ENCODE measurements at regions of chr3 and their contacts with region 1.

Region 1: DNA sequence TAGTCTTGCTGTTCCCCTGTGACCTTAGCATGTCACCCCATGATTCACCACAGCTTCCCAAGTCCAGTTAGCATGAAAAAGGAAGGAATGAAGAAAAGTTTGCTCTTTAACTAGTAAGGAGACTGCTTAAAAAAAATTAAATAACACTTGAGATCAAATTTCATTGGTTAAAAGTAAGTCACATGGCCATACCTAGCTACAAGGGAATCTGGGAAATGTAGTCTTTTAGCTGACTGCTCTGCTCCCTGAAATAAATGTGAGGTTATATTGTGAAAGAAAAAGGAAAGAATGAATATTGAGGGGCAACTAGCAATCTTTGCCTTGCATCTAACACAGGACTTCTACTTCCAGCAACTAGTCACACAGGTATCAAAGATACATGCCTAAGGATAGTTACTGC is 84.7 kb upstream of the LRRN1 start:
- DNase-seq: no peak
- ATAC-seq: no peak
- H3K4me3 ChIP-seq: no peak overlapping the region
- H3K27ac ChIP-seq: no peak overlapping the region
- H3K4me1 ChIP-seq: no peaks in the 10 kb centered on the region
- H3K27me3 ChIP-seq: no peaks in the 10 kb centered on the region

Region 2: GRCh38 chr3:3468596-3468995 is 246.0 kb before region 1 on chr3:
- intact Hi-C with region 1: no loop called
- DNase-seq: no peak
- ATAC-seq: no peak
- H3K4me3 ChIP-seq: no peak overlapping the region
- H3K27ac ChIP-seq: no peak overlapping the region
- H3K4me1 ChIP-seq: no peaks in the 10 kb centered on the region
- H3K27me3 ChIP-seq: peaks cover 0 to 1% of the 10 kb centered on the region in 2 donors

Region 3: GRCh38 chr3:3686907-3687648 is 27.5 kb before region 1 on chr3:
- intact Hi-C with region 1: loop called in 1 of 2 experiments (anchors 2 kb)
- DNase-seq: no peak
- ATAC-seq: no peak
- H3K4me3 ChIP-seq: no peak overlapping the region
- H3K27ac ChIP-seq: no peak overlapping the region
- H3K4me1 ChIP-seq: no peaks in the 10 kb centered on the region
- H3K27me3 ChIP-seq: no peaks in the 10 kb centered on the region

Measured in aorta (tissue), 5 donors.